ENCODE measurements at regions of chr19 and their contacts with region 1.

Region 1: GRCh38 chr19:51660975-51661600 is 14.5 kb upstream of the SIGLEC14 start:
- DNase-seq: peak; percentile 86
- ATAC-seq: peak; percentile 66
- H3K4me3 Mint-ChIP-seq: no peak overlapping the region
- H3K27ac Mint-ChIP-seq: no peak overlapping the region
- H3K4me1 Mint-ChIP-seq: peaks cover 5% of the 10 kb centered on the region
- H3K27me3 Mint-ChIP-seq: peaks cover 28% of the 10 kb centered on the region

Region 2: GRCh38 chr19:51158474-51159129 is 502.5 kb before region 1 on chr19:
- CTCF ChIA-PET with region 1: interaction called, 6 read pairs
- POLR2A ChIA-PET with region 1: no interaction called
- intact Hi-C with region 1: loop called (anchors 2 kb)
- DNase-seq: peak; percentile 90
- ATAC-seq: peak; percentile 86
- H3K4me3 Mint-ChIP-seq: no peak overlapping the region
- H3K27ac Mint-ChIP-seq: no peak overlapping the region
- H3K4me1 Mint-ChIP-seq: peaks cover 5% of the 10 kb centered on the region
- H3K27me3 Mint-ChIP-seq: no peaks in the 10 kb centered on the region

Region 3: GRCh38 chr19:51473009-51473707 is 187.9 kb before region 1 on chr19:
- CTCF ChIA-PET with region 1: interaction called, 17 read pairs
- POLR2A ChIA-PET with region 1: no interaction called
- intact Hi-C with region 1: loop called (anchors 1 kb)
- DNase-seq: peak; percentile 93
- ATAC-seq: peak; percentile 96
- H3K4me3 Mint-ChIP-seq: no peak overlapping the region
- H3K27ac Mint-ChIP-seq: no peak overlapping the region
- H3K4me1 Mint-ChIP-seq: peaks cover 20% of the 10 kb centered on the region
- H3K27me3 Mint-ChIP-seq: peaks cover 6% of the 10 kb centered on the region

Region 4: GRCh38 chr19:51607920-51608562 is 53.0 kb before region 1 on chr19:
- CTCF ChIA-PET with region 1: interaction called, 4 read pairs
- POLR2A ChIA-PET with region 1: no interaction called
- intact Hi-C with region 1: loop called (anchors 2 to 5 kb)
- DNase-seq: peak; percentile 88
- ATAC-seq: peak; percentile 37
- H3K4me3 Mint-ChIP-seq: no peak overlapping the region
- H3K27ac Mint-ChIP-seq: no peak overlapping the region
- H3K4me1 Mint-ChIP-seq: peaks cover 21% of the 10 kb centered on the region
- H3K27me3 Mint-ChIP-seq: peaks cover 36% of the 10 kb centered on the region

Region 5: GRCh38 chr19:51681321-51682168 is 20.5 kb after region 1 on chr19:
- CTCF ChIA-PET with region 1: interaction called, 77 read pairs
- POLR2A ChIA-PET with region 1: no interaction called
- intact Hi-C with region 1: no loop called
- DNase-seq: no peak
- ATAC-seq: no peak
- H3K4me3 Mint-ChIP-seq: no peak overlapping the region
- H3K27ac Mint-ChIP-seq: no peak overlapping the region
- H3K4me1 Mint-ChIP-seq: peaks cover 6% of the 10 kb centered on the region
- H3K27me3 Mint-ChIP-seq: peaks cover 5% of the 10 kb centered on the region